ENCODE measurements at regions of chr4 and their contacts with region 1.

Region 1: GRCh38 chr4:80540785-80541469 is 205.4 kb downstream of the CFAP299 start:
- DNase-seq: no peak
- H3K4me3 Mint-ChIP-seq: no peak overlapping the region
- H3K27ac Mint-ChIP-seq: no peak overlapping the region
- H3K4me1 Mint-ChIP-seq: peaks cover 11% of the 10 kb centered on the region
- H3K27me3 Mint-ChIP-seq: peaks cover 45% of the 10 kb centered on the region

Region 2: DNA sequence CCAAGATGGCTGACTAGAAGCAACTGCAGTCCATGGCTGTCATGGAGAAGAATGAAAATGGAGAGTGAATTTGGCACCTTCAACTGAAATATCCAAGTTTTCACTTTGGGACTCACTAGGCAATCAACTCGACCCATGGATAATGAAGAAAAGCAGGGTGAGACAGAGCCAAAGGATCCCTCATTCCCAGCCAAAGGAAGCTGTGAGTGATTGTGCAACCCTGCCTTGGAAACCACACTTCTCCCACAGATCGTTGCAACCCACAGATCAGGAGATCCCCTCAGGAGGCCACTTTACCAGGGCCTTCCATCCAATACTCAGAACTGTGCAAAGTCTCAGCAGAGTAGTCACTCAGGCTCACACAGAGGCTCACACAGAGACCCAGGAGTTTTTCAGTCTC is 200.9 kb before region 1 on chr4:
- intact Hi-C with region 1: no loop called
- DNase-seq: no peak
- H3K4me3 Mint-ChIP-seq: no peak overlapping the region
- H3K27ac Mint-ChIP-seq: no peak overlapping the region
- H3K4me1 Mint-ChIP-seq: peaks cover 9% of the 10 kb centered on the region
- H3K27me3 Mint-ChIP-seq: peaks cover 14% of the 10 kb centered on the region

Region 3: DNA sequence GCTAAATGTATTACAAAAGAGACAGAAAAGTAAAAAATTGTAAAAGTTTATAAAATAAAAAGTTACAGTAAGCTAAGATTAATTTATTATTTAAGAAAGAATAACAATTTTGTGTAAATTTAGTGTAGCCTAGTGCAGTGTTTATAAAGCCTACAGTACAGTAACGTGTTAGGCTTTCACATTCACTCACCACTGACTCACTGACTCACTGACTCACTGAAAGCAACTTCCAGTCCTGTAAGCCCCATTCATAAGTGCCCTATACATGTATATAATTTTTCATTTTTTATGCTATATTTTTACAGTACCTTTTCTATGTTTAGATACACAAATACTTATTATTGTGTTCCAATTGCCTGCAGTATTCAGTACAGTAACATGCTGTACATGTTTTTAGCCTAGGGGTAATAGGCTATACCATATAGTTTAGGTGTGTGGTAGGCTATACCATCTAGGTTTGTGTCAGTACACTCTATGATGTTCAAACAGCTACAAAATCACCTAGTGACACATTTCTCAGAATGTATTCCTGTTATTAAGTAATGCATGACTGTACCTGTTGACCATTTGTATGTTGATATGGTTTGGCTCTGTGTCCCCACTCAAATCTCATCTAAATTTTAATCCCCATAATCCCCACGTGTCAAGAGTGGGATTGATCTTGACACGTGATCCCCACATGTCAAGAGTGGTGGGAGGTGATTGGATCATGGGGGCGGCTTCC is 147.5 kb before region 1 on chr4:
- intact Hi-C with region 1: loop called (anchors 1 kb)
- DNase-seq: no peak
- H3K4me3 Mint-ChIP-seq: no peak overlapping the region
- H3K27ac Mint-ChIP-seq: peak overlapping the region; percentile 14
- H3K4me1 Mint-ChIP-seq: no peaks in the 10 kb centered on the region
- H3K27me3 Mint-ChIP-seq: no peaks in the 10 kb centered on the region

Region 4: GRCh38 chr4:80967346-80967745 is 426.4 kb after region 1 on chr4:
- intact Hi-C with region 1: no loop called
- DNase-seq: no peak
- H3K4me3 Mint-ChIP-seq: no peak overlapping the region
- H3K27ac Mint-ChIP-seq: no peak overlapping the region
- H3K4me1 Mint-ChIP-seq: no peaks in the 10 kb centered on the region
- H3K27me3 Mint-ChIP-seq: no peaks in the 10 kb centered on the region

Measured in activated T-helper 2 cell treated with anti-CD3 and anti-CD28 coated beads, Interferon-gamma antibody, Interleukin-2, Interleukin-4, amounts not matched to agents 10 μg/mL and 5 μg/mL and 100 μg/mL, durations not matched to agents 14 hours and 24 hours and 36 hours (primary cell).